ENCODE measurements at regions of chr9 and their contacts with region 1.

Region 1: DNA sequence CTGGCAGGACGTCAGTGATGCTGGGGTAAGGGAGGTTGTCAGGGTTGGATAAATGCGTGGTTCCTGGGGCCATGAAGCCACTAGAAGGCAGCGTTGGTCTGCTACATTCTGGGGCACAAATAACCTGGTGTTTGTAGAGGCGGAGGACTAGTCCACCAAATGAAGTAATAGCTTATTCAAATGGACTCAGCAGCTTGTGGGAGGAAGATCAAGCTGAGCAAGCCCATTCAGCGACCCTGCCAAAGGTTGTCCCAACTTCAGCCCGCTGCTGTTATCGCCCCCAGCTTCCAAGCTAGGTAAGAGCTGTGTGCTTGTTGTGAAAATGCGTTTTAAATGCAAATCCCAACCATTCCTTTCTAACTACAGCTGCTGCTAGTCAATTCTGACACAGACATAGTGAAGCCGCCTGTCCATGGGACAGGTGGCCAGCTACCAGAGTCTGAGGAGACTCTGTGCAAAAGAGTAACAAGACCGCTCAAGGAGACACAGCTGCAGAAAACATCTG is 7.6 kb upstream of the FAM240B start:
- DNase-seq: no peak
- ATAC-seq: no peak
- H3K4me3 ChIP-seq: no peak overlapping the region
- H3K27ac ChIP-seq: no peak overlapping the region
- H3K4me1 ChIP-seq: no peaks in the 10 kb centered on the region
- H3K27me3 ChIP-seq: no peaks in the 10 kb centered on the region
- CTCF ChIP-seq: no peak
- POLR2A ChIP-seq: no peak

Region 2: DNA sequence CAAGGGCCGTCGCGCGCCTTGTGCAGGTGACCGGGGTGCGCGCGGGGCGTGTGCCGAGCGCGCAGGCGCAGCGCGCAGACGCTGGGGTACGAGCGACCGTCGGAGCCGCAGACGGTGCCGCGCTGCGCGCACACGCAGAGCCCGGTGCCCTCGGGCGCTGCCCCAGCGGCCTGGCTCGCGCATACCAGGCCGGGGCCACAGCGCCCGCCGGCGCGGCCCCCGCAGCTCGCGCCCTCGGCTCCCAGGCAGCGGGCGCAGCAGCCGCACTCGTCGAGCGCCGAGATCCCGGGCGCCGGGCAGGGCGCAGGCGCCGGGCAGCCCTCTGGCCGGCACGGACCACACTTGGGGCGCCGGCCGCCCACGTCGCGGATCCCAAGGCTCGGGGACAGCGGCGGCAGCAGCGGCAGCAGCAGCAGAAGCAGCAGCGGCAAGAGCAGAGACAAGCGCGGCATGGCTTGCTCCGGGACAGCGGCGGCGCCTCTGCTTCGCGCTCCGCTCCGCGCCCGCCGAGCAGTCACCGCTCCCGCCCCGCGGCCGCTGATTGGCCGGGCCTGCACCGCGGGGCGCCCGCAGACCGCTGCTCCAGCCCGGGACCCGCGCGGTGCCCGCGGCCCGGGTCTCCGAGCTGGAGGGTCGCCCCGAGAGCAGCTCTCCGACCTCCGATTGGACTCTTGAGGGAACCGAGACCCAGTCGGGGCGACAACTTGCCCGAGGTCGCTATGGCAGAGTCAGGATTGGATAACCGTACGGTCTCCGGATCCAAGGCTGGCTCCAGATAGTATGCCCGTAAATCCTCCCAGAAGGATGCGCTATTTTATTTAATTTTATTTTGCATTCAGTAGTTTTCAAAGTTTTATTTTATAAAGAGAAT is 303.3 kb before region 1 on chr9 and contains the start of gene IGFBPL1:
- in situ Hi-C with region 1: no loop called
- intact Hi-C with region 1: no loop called
- DNase-seq: no peak
- ATAC-seq: no peak
- H3K4me3 ChIP-seq: peak within 1 kb of the TSS in 2 of 4 donors; percentile 22
- H3K27ac ChIP-seq: no peak within 1 kb of the TSS
- H3K4me1 ChIP-seq: no peaks in the 10 kb centered on the region
- H3K27me3 ChIP-seq: peaks cover 13 to 33% (median 31%) of the 10 kb centered on the region in 3 donors
- CTCF ChIP-seq: no peak
- POLR2A ChIP-seq: no peak
- total RNA-seq, gene IGFBPL1: not detected

Region 3: GRCh38 chr9:38482918-38483592 is 244.5 kb before region 1 on chr9:
- in situ Hi-C with region 1: no loop called
- intact Hi-C with region 1: no loop called
- DNase-seq: no peak
- ATAC-seq: no peak
- H3K4me3 ChIP-seq: no peak overlapping the region
- H3K27ac ChIP-seq: no peak overlapping the region
- H3K4me1 ChIP-seq: no peaks in the 10 kb centered on the region
- H3K27me3 ChIP-seq: no peaks in the 10 kb centered on the region
- CTCF ChIP-seq: no peak
- POLR2A ChIP-seq: no peak

Region 4: DNA sequence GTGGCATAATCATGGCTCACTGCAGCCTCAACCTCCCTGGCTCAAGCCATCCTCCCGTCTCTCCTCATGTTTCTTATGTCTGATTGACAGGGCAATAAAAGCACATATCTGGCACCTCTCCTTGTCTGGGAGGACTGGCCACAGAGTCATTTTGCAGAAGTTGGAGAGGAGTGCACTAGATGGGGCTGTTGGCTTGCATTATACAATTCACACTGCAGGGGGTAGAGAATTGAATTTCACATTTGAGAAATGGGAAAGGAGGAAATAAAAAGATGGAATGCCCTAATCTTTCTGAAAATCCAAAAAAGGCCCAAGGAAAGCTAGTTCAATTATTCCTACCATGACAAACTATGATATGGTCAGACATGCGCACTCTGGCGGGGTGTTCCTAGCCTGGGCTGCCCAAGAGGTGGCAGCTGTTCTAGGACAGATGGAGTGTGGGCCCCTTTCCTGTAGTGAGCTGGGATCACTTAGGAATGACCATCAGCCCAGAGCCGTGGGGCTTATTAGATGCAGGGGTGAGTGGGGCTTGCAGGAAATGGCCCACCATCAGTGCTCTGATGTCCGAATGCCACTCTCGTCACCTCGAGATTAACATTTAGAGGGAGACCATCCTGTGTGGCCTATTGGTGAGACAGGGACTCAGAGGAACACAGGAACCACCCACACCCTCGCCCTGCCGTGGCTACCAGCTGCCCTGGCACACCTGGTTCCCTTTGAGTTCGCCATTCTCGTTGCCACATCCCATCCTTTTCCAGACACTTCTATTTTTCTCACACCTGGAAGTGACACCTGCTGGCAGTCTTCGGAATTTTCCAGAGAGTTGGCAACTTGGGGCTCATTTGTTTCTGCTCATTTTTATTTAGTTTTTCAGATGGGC is 85.3 kb before region 1 on chr9:
- in situ Hi-C with region 1: loop called in 1 of 4 experiments (anchors 25 kb)
- intact Hi-C with region 1: no loop called
- DNase-seq: no peak
- ATAC-seq: no peak
- H3K4me3 ChIP-seq: no peak overlapping the region
- H3K27ac ChIP-seq: no peak overlapping the region
- H3K4me1 ChIP-seq: no peaks in the 10 kb centered on the region
- H3K27me3 ChIP-seq: peaks cover 0 to 3% (median 0%) of the 10 kb centered on the region in 3 donors
- CTCF ChIP-seq: no peak
- POLR2A ChIP-seq: no peak

Region 5: GRCh38 chr9:38662763-38663593 is 64.6 kb before region 1 on chr9:
- in situ Hi-C with region 1: no loop called
- intact Hi-C with region 1: no loop called
- DNase-seq: no peak
- ATAC-seq: no peak
- H3K4me3 ChIP-seq: no peak overlapping the region
- H3K27ac ChIP-seq: no peak overlapping the region
- H3K4me1 ChIP-seq: no peaks in the 10 kb centered on the region
- H3K27me3 ChIP-seq: no peaks in the 10 kb centered on the region
- CTCF ChIP-seq: no peak
- POLR2A ChIP-seq: no peak

Region 6: GRCh38 chr9:38761334-38761733 is 33.8 kb after region 1 on chr9:
- in situ Hi-C with region 1: no loop called
- intact Hi-C with region 1: no loop called
- DNase-seq: no peak
- ATAC-seq: no peak
- H3K4me3 ChIP-seq: no peak overlapping the region
- H3K27ac ChIP-seq: no peak overlapping the region
- H3K4me1 ChIP-seq: no peaks in the 10 kb centered on the region
- H3K27me3 ChIP-seq: peaks cover 0 to 2% (median 0%) of the 10 kb centered on the region in 3 donors
- CTCF ChIP-seq: no peak
- POLR2A ChIP-seq: no peak

Measured in gastrocnemius medialis (tissue), 4 donors.